ENCODE measurements at regions of chr5 and their contacts with region 1.

Region 1: DNA sequence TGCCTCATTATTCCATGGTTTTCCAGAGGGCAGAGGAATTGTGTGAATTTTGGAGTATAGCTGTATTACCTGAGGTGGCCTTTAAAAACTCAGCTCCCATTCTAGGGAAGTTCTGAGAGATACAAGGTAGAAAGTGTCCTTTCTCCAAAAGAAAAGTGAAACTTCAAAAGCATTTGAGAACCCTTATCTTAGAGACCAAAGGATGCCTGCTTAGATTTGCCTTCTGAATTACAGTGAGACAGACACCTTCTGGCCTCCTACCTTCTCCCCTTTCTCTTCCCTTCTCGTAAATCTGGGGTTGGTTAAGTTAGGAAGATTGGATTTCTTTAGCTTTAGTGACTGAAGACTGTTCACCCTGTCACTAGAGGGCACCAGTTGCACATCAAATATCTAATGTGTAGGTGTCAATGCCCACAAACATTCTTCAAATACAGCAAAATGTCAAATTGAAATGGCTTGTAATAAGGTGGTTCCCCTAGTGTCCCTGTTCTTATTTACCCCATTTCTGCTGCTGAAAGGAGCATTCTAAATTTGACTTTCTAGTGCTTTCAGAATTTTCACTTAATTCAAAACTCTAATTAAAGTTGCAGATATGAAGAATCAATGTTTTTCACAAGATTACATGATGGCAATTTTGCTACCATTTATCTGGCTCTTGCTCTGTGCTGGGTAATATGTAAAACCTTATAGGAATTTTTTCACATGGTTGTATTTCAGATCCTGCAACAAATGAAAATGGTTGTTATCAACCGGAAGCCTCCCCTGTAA is 46.7 kb downstream of the PRRC1 start:
- DNase-seq: peak; percentile 63
- ATAC-seq: peak; percentile 74
- H3K4me3 Mint-ChIP-seq: no peak overlapping the region
- H3K27ac Mint-ChIP-seq: no peak overlapping the region
- H3K4me1 Mint-ChIP-seq: peaks cover 10% of the 10 kb centered on the region
- H3K27me3 Mint-ChIP-seq: peaks cover 18% of the 10 kb centered on the region

Region 2: DNA sequence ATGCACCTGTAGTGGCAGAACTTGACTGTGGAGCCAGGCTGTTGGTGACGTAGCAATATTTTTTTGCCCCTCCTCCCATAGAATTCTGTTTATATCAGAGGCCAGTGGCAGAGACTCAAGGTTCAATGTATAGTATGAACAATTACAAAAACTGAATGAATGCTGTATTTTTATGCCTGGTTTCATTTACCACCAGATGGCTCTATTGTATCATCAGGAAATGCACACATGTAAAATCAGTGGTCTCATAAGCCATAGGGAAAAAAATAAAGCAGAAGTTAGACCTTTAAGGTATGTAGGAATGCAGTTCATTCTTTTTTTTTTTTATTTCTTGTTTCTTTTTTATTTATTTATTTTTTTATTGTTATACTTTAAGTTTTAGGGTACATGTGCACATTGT is 182.6 kb after region 1 on chr5:
- CTCF ChIA-PET with region 1: no interaction called
- POLR2A ChIA-PET with region 1: no interaction called
- DNase-seq: no peak
- ATAC-seq: no peak
- H3K4me3 Mint-ChIP-seq: no peak overlapping the region
- H3K27ac Mint-ChIP-seq: no peak overlapping the region
- H3K4me1 Mint-ChIP-seq: no peaks in the 10 kb centered on the region
- H3K27me3 Mint-ChIP-seq: no peaks in the 10 kb centered on the region

Region 3: DNA sequence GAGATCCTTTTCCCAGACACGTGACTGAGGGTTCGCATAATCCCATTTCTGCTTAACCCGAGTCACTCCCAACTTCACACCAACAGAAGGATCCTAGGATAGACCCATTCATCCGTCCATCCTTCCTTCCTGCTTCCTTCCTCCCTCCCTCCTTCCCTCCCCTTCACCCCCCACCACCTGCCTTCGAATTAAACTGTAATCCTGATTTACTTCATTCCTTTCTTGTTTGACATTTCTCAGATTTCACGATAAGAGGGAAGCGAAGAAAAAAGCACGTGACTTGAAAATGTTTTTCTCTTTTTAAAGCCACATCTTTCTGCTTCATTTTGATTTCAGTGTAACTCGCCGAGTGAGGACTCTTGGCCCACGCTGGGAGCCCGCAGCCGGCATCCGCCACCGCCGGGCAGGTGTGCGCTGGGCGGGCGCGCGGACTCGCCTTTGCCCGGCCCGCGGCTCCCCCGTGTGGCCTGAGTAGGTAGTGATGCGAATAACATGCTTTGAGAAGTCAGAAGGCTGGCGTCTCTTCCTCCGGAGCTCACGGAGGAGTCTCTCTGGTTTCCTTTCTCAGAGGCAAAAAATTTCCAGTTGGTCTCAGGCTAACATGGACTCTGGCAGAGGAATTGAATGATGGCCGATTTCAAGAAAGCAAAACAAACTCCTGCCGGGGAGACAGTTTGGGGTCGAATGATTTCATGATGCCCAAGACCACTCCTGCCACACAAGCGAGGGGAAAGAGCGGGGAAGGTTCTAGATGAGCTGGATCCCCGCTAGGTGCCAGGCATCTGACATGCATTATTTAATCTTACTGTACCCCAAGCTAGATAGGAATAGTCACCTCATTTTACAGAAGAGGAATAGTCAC is 637.1 kb after region 1 on chr5:
- CTCF ChIA-PET with region 1: interaction called, 14 read pairs
- POLR2A ChIA-PET with region 1: no interaction called
- DNase-seq: peak; percentile 87
- ATAC-seq: peak; percentile 98
- H3K4me3 Mint-ChIP-seq: peak overlapping the region; percentile 49
- H3K27ac Mint-ChIP-seq: no peak overlapping the region
- H3K4me1 Mint-ChIP-seq: peaks cover 27% of the 10 kb centered on the region
- H3K27me3 Mint-ChIP-seq: peaks cover 15% of the 10 kb centered on the region